OCI-LY7 (cell line): ENCODE measurements at regions of chr11 and their contacts with region 1.

Region 1: DNA sequence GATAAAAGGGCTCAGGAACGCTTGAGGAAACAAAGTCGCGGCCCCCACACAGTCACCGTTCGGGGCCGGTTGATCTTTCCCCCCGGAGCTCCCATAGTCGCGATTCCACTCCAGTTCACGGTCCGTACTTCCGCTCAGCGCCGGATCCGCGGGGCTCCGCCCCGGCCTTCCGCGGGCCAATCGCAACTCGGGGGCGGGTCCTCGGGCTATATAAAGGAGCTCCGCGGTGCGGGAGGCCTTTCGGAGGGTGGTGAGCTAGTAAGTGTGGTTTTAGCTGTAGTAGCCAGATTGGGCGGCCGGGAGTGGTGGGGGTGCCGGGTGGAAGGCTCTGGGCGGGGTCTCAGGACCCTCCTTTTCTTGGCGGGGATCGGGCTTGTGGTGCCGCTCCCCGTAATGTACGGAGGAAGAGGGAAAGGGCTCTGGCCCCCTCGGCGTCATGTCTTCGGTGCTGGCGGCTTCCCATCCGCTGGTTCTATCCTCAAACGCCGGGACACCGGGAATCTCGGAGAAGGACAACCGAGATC is at the starts of genes C11orf98 and CSKMT:
- DNase-seq: peak; percentile 94
- H3K4me3 ChIP-seq: peak within 1 kb of the TSS; percentile 86
- H3K27ac ChIP-seq: peak within 1 kb of the TSS; percentile 94
- H3K4me1 ChIP-seq: peaks cover 40% of the 10 kb centered on the region
- CTCF ChIP-seq: no peak
- total RNA-seq, gene C11orf98: 148 and 194 TPM in 2 replicates
- total RNA-seq, gene CSKMT: 88.4 and 90.8 TPM in 2 replicates

Region 2: GRCh38 chr11:61985885-61986345 is 679.2 kb before region 1 on chr11:
- CTCF ChIA-PET with region 1: no interaction called
- POLR2A ChIA-PET with region 1: no interaction called
- intact Hi-C with region 1: no loop called
- DNase-seq: no peak
- H3K4me3 ChIP-seq: no peak overlapping the region
- H3K27ac ChIP-seq: no peak overlapping the region
- H3K4me1 ChIP-seq: peaks cover 4% of the 10 kb centered on the region
- CTCF ChIP-seq: no peak

Region 3: DNA sequence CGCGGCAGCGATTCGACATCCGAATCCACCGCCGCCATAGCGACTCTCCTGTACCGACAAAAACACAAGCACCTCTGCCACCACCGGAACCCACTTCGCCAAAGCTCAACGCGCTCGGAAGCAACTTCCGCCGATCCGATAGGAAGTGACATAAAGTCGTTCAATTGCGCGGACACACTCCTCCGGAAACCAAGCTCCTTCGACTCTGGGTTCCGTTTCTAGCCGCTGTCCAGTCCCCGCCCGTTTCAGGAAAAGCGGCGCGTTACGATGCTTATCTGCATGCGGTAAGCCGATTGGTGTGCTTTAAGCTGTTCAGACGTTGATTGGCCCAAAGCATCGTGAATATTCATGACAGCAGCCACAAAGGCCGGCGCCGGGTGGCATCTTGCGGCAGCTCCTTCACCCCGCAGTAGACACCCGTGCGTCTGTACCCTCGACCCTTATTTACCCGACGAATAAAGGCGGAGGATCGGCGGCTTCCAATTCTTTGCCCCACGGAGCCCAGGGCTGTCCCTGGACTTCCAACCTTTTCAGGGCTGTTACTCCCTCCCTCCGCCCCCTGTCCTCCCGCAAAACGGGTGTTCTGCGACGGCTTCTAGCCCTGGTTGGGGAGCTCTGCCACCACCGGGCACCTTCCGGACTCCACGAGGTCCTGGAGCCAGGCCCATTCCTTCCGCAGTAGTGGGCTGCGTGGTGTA is 73.5 kb before region 1 on chr11 and contains the start of gene TUT1:
- CTCF ChIA-PET with region 1: no interaction called
- POLR2A ChIA-PET with region 1: interaction called, 30 read pairs
- intact Hi-C with region 1: loop called (anchors 5 kb)
- DNase-seq: peak; percentile 100
- H3K4me3 ChIP-seq: peak within 1 kb of the TSS; percentile 85
- H3K27ac ChIP-seq: peak within 1 kb of the TSS; percentile 79
- H3K4me1 ChIP-seq: peaks cover 33% of the 10 kb centered on the region
- CTCF ChIP-seq: 0 out of 2 replicates have a peak, but pooled peaks have one; percentile 7
- total RNA-seq, gene TUT1: 15.6 and 22.5 TPM in 2 replicates

Region 4: DNA sequence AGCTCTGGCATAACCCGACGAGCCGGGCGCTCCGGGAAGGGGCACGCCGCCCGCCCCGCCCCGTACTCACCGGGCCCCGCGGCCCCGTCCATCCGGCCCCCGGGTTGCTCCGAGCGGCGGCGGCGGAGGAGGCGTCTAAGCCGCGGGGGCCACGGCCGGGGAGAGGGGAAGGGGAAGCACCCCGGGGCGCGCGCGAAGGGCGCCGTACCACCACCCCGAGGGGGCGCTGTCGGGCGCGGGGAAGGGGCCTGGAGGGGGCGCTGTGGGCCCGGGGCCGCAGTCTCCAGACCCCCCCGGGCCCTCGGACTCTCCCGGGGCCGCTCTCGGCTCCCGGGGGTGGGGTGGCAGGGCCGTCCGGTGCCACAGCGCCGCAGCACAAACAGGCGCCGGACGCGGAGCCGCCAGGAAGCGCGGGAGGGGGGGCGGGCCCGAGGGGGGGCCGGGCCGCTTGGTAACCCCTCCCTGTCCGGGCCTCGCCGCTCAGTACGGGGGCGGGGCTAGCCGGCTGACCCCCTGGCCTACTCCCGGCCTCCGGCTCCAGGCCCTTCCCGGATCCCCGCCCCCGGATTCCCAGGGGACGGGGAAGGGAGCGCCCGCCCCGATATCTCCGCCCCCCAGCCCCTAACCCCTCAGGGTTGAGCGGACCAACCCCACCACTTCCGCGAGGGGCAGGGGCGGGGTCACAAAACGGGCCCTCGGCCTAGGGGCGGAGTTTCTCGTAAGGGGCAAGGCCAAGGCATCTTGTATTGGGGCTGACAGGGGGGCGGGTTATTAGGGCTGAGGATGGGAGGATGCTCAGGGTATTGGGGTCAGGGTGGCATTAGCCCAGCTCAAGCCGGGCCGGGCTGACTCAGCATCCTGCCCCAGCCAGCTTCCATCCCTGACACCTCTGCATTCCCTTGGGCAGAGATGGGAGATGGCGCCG is 52.5 kb before region 1 on chr11 and contains the starts of genes EML3 and ROM1:
- CTCF ChIA-PET with region 1: no interaction called
- POLR2A ChIA-PET with region 1: interaction called, 6 read pairs
- intact Hi-C with region 1: loop called (anchors 2 kb)
- DNase-seq: peak; percentile 92
- H3K4me3 ChIP-seq: peak within 1 kb of the TSS; percentile 71
- H3K27ac ChIP-seq: peak within 1 kb of the TSS; percentile 61
- H3K4me1 ChIP-seq: peaks cover 27% of the 10 kb centered on the region
- CTCF ChIP-seq: peak; percentile 94
- total RNA-seq, gene EML3: 41.2 and 52.8 TPM in 2 replicates
- total RNA-seq, gene ROM1: 0.69 and 1.1 TPM in 2 replicates

Region 5: GRCh38 chr11:62645956-62646824 is 18.9 kb before region 1 on chr11 and contains the start of gene GANAB:
- CTCF ChIA-PET with region 1: interaction called, 3 read pairs
- POLR2A ChIA-PET with region 1: interaction called, 159 read pairs
- intact Hi-C with region 1: no loop called
- DNase-seq: peak; percentile 99
- H3K4me3 ChIP-seq: peak within 1 kb of the TSS; percentile 95
- H3K27ac ChIP-seq: peak within 1 kb of the TSS; percentile 76
- H3K4me1 ChIP-seq: peaks cover 20% of the 10 kb centered on the region
- CTCF ChIP-seq: no peak
- total RNA-seq, gene GANAB: 91.4 and 108 TPM in 2 replicates

Region 6: GRCh38 chr11:62753736-62754603 is 88.8 kb after region 1 on chr11 and contains the start of gene ZBTB3:
- CTCF ChIA-PET with region 1: no interaction called
- POLR2A ChIA-PET with region 1: interaction called, 13 read pairs
- intact Hi-C with region 1: no loop called
- DNase-seq: peak; percentile 99
- H3K4me3 ChIP-seq: peak within 1 kb of the TSS; percentile 71
- H3K27ac ChIP-seq: peak within 1 kb of the TSS; percentile 60
- H3K4me1 ChIP-seq: peaks cover 20% of the 10 kb centered on the region
- CTCF ChIP-seq: no peak
- total RNA-seq, gene ZBTB3: 11.1 and 11.8 TPM in 2 replicates

Region 7: DNA sequence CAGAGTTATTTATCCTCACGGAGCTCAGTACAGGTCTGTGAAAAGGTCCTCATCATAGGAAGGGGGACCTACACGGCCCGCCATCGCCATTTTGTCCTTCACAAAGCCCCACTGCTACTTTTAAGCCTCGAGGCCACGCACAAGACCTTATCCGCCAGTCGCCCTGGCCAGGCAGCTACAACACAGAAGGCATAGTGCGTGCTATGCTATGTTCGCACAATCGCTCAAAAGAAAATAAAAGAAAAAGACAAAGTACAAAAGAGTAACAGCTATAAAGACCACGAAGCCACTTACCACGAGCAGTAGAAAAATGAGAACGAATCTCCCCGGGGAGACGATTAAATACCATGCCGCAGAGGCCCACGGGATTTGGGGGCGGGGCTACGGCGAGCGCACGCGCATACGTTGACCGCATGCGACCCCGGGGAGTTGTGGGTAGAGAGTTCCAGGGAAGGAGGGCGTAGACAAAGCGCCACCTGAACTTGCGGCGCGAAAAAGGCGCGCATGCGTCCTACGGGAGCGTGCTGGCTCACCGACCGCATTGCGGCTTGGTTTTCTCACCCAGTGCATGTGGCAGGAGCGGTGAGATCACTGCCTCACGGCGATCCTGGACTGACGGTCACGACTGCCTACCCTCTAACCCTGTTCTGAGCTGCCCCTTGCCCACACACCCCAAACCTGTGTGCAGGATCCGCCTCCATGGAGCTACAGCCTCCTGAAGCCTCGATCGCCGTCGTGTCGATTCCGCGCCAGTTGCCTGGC is 190.6 kb after region 1 on chr11:
- CTCF ChIA-PET with region 1: no interaction called
- POLR2A ChIA-PET with region 1: interaction called, 14 read pairs
- intact Hi-C with region 1: no loop called
- DNase-seq: peak; percentile 99
- H3K4me3 ChIP-seq: peak overlapping the region; percentile 94
- H3K27ac ChIP-seq: peak overlapping the region; percentile 92
- H3K4me1 ChIP-seq: peaks cover 45% of the 10 kb centered on the region
- CTCF ChIP-seq: no peak

Region 8: GRCh38 chr11:63023841-63024648 is 358.9 kb after region 1 on chr11:
- CTCF ChIA-PET with region 1: no interaction called
- POLR2A ChIA-PET with region 1: no interaction called
- intact Hi-C with region 1: no loop called
- DNase-seq: peak; percentile 73
- H3K4me3 ChIP-seq: no peak overlapping the region
- H3K27ac ChIP-seq: no peak overlapping the region
- H3K4me1 ChIP-seq: no peaks in the 10 kb centered on the region
- CTCF ChIP-seq: peak; percentile 100